HEK293 (cell line): ENCODE measurements at regions of chr12 and their contacts with region 1.

Region 1: GRCh38 chr12:107607464-107608392 is 77.9 kb upstream of the PWP1 start:
- H3K4me3 ChIP-seq: no peak overlapping the region
- H3K27ac ChIP-seq: no peak overlapping the region
- H3K4me1 ChIP-seq: no peaks in the 10 kb centered on the region
- CTCF ChIP-seq: peak; percentile 78

Region 2: DNA sequence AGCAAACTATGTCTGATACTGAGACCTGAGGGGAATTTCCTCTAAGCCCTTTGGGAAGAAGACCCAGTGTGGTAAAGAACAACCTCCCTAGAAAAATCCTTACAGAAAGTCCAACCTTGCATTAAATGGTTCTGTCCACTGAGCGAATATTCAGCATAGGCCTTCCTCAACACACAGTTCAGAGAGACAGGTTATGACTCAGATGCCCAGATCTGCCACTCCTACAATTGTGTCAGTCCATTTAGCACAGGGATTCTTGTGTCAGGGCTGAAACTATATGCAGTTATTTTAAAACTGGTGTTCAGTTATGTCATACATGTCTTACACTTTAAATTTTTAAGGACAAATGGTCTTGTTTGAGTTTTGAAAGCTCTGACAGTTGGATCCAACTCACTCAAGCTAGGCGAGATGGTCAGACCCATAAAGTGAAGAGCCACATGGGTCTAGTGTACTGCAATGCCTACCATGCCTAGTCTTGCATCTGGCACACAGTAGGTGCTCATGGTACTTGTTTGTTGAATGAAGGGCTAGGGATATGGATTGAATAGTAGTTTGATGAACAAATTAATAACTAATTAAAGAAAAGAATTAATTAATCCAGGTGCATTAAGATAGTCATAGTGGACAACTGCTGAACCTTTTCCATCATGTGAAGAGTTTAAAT is 129.6 kb before region 1 on chr12:
- CTCF ChIA-PET with region 1: no interaction called
- POLR2A ChIA-PET with region 1: no interaction called
- H3K4me3 ChIP-seq: no peak overlapping the region
- H3K27ac ChIP-seq: no peak overlapping the region
- H3K4me1 ChIP-seq: 0 out of 2 replicates have a peak, but pooled peaks cover 2% of the 10 kb centered on the region
- CTCF ChIP-seq: no peak

Region 3: GRCh38 chr12:107568718-107569117 is 39.0 kb before region 1 on chr12:
- CTCF ChIA-PET with region 1: interaction called, 10 read pairs
- POLR2A ChIA-PET with region 1: no interaction called
- H3K4me3 ChIP-seq: no peak overlapping the region
- H3K27ac ChIP-seq: no peak overlapping the region
- H3K4me1 ChIP-seq: no peaks in the 10 kb centered on the region
- CTCF ChIP-seq: no peak

Region 4: DNA sequence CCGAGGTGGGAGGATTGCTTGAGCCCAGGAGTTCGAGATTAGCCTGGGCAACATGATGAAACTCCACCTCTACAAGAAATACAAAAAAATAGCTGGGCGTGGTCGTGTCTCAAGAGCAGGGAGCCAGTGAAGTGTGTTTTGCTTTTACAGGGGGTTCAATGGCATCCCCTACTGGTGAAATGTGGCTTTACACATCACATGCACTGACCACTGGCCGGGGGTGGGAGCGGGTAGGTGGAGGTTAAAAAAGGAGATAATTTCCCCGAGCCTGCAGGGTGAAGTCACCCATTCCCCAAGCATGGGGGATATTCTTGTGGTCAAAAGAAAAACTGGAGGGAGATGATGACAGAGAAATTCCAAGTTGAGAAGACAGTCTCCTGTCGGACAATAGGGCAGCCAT is 14.3 kb after region 1 on chr12:
- CTCF ChIA-PET with region 1: interaction called, 61 read pairs
- POLR2A ChIA-PET with region 1: no interaction called
- H3K4me3 ChIP-seq: no peak overlapping the region
- H3K27ac ChIP-seq: no peak overlapping the region
- H3K4me1 ChIP-seq: no peaks in the 10 kb centered on the region
- CTCF ChIP-seq: peak; percentile 37; the same call in 1 of the 2 replicates